B cell (primary cell): ENCODE measurements at regions of chr12 and their contacts with region 1.

Region 1: DNA sequence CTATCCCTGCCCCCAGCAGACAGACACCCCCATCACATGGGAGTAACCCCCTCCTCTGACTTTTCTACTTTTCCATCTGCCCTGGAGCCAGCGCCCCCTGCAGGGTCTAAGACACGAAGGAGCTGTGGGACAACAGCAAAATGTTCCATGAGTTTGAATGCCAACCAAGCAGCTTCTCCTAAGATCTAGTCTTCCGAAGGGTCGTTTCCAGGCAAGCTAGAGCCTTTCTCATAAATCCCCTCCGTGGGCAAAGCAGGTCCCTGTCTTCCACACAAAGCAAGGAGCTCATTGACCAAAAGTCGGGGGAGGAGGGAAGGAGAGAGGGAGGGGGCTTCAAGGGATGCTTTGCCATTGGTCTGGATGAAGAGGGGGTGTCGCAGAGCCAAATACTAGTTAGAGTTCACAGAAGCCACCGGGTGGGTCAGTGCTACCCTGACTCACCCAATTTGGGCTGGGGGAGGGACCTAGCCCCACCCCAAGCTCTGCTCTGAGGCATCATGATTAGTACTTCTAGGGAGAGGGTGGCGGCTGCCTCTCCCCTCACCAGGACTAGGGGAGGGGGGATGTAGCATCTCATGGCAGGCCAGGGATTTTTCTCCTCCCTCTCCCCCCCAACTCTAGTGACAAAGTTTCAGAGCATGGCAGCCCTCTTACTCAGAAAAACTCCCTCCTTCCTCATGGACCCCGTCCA is 1.6 kb downstream of the MSI1 start:
- DNase-seq: no peak
- ATAC-seq: no peak
- H3K4me3 ChIP-seq: no peak overlapping the region
- H3K4me3 Mint-ChIP-seq: peak overlapping the region; percentile 67
- H3K27ac ChIP-seq: no peak overlapping the region
- H3K27ac Mint-ChIP-seq: no peak overlapping the region
- H3K4me1 ChIP-seq: peaks cover 8 to 22% of the 10 kb centered on the region in 2 donors
- H3K4me1 Mint-ChIP-seq: peaks cover 17% of the 10 kb centered on the region
- H3K27me3 ChIP-seq: peaks cover 0 to 79% (median 42%) of the 10 kb centered on the region in 4 experiments
- H3K27me3 Mint-ChIP-seq: peaks cover 80% of the 10 kb centered on the region
- CTCF ChIP-seq: no peak

Region 2: DNA sequence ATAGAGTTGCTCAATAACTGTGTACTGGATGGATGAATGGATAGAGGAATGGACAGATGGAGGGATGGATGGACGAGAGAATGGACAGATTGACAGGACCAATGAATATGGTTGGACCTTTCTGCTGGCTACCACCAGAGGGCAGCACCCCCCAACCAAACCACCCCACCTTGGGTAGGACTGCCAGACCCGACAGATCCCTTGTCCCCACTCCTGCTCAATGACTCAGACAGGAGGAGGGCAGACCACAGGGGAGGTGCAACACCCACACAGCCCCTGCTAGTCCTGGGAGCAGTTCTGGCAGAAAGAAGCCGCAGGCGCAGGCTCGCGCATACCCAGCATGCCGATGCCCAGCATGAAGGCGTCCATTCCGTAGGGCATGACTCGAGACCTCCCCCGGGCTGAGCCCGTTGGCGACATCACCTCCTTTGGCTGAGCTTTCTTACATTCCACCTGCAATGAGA is 10.8 kb before region 1 on chr12:
- CTCF ChIA-PET with region 1: interaction called, 13 read pairs
- POLR2A ChIA-PET with region 1: no interaction called
- intact Hi-C with region 1: no loop called
- DNase-seq: peak; percentile 78
- ATAC-seq: peak; percentile 73
- H3K4me3 ChIP-seq: no peak overlapping the region
- H3K4me3 Mint-ChIP-seq: no peak overlapping the region
- H3K27ac ChIP-seq: no peak overlapping the region
- H3K27ac Mint-ChIP-seq: no peak overlapping the region
- H3K4me1 ChIP-seq: peaks cover 0 to 6% of the 10 kb centered on the region in 2 donors
- H3K4me1 Mint-ChIP-seq: peaks cover under 1% of the 10 kb centered on the region
- H3K27me3 ChIP-seq: peaks cover 0 to 20% (median 8%) of the 10 kb centered on the region in 4 experiments
- H3K27me3 Mint-ChIP-seq: peaks cover 52% of the 10 kb centered on the region
- CTCF ChIP-seq: peak; percentile 84